ENCODE measurements at regions of chr3 and their contacts with region 1.

Region 1: DNA sequence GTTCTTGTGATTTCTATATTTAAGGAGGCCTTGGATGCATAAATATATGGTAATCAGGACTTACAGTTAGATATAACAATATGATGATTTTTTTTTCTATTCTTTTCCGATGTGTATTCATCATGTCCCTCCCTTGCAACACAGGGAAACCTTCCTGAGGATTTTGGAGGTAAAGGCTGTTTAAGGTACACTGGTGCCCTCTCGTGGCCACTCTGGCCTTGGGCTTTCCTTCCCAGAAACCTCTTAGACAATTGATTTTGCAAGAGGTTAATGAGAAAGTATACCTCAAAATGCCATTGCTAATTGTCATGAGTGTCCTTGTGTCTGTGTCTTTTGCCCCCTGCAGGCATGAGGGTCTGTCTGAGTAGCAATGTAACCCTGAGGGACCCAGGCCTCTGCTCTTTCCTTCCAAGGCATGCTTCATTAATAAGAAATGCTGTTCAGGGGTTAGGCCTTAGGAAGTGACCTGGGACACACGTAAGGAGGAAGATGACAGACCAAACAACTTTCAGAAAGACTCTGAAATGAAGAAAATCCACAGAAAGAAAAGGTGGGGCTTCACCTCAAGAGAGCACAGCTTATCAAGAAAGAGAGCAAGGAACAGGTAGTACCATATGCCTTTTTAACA is 70.3 kb upstream of the PPP2R3A start:
- DNase-seq: peak; percentile 73
- H3K4me3 ChIP-seq: no peak overlapping the region
- H3K27ac ChIP-seq: peak overlapping the region; percentile 1
- H3K4me1 ChIP-seq: peaks cover 18% of the 10 kb centered on the region
- H3K27me3 ChIP-seq: no peaks in the 10 kb centered on the region
- CTCF ChIP-seq: peak; percentile 90 to 95

Region 2: GRCh38 chr3:134794950-134795745 is 1100.1 kb before region 1 on chr3 and contains the start of gene EPHB1:
- CTCF ChIA-PET with region 1: no interaction called
- dilution Hi-C with region 1: no loop called
- in situ Hi-C with region 1: loop called in 1 of 2 experiments (anchors 25 kb)
- intact Hi-C with region 1: loop called (anchors 1 kb)
- DNase-seq: peak; percentile 82
- H3K4me3 ChIP-seq: peak within 1 kb of the TSS; percentile 42 to 55 (median 44)
- H3K27ac ChIP-seq: no peak within 1 kb of the TSS
- H3K4me1 ChIP-seq: peaks cover 12% of the 10 kb centered on the region
- H3K27me3 ChIP-seq: peaks cover 25% of the 10 kb centered on the region
- CTCF ChIP-seq: peak; percentile 68 to 77
- total RNA-seq, gene EPHB1: 0.24 TPM in 1 of 2 donors, not detected in the other

Region 3: DNA sequence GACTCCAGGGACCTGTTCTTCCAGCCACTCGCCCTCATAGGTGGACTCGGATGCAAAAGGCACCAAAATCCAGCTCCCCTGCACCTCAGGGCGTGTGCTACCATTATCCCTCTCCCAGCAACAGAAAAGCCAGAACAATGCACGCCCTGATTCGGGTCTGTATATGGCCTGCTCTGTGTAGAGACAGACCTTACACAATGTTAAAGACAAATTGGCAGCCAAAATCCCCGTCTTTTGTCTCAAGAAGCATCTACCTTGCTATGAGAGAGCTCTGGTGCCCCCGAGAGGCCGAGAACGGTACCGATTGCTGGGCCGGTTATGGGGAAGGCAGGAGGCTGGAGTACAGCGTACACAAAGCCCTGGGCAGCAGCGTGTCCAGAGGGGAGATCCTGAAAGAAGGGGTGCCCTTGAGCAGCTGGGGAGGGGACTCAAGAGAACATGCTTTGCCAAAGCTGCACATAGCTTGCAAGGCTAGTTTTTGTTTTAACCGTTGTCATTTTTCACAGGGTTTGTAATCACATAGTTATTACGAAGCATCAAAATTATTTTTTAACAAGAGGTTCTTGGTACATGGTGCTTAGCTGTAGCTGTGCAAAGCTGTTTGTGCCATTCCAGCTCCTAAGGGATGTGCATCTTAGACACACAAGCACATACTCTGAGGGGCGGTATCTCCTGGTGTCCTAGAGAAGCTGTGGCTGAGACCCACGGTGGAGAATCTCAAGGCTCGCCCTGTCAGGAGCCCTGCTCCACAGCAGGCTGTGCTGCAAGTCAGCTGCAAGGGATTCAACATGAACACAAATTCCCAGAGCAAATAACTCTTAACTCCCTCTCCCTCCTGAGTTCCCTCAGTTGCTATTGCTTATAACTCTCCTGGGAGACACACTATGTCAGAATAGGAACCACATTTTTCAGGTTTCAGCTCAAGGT is 391.2 kb before region 1 on chr3:
- CTCF ChIA-PET with region 1: no interaction called
- dilution Hi-C with region 1: no loop called
- in situ Hi-C with region 1: no loop called
- intact Hi-C with region 1: loop called (anchors 2 kb)
- DNase-seq: peak; percentile 40
- H3K4me3 ChIP-seq: no peak overlapping the region
- H3K27ac ChIP-seq: no peak overlapping the region
- H3K4me1 ChIP-seq: no peaks in the 10 kb centered on the region
- H3K27me3 ChIP-seq: no peaks in the 10 kb centered on the region
- CTCF ChIP-seq: peak; percentile 77 to 79

Region 4: DNA sequence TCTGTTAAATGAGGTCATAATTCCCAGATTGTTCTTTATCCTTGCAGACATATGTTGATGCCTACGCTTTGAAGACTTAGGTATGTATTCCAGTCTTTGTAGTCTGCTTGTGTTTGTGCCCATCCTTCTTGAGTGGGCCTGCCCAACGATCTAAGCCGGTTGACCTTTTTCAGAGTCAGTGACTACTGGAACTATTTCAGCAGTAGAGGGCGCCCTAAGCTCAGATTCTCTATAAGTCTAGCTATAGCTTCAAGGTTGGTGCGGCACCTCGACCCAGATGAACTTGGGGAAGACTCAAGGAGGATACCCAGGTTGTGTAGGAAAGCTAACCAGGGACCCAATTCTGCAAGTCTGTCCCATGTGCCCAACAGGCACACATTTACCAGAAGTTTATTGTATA is 158.5 kb before region 1 on chr3:
- CTCF ChIA-PET with region 1: no interaction called
- dilution Hi-C with region 1: no loop called
- in situ Hi-C with region 1: loop called in 1 of 2 experiments (anchors 5 kb)
- intact Hi-C with region 1: loop called (anchors 1 kb)
- DNase-seq: peak; percentile 30
- H3K4me3 ChIP-seq: no peak overlapping the region
- H3K27ac ChIP-seq: no peak overlapping the region
- H3K4me1 ChIP-seq: no peaks in the 10 kb centered on the region
- H3K27me3 ChIP-seq: no peaks in the 10 kb centered on the region
- CTCF ChIP-seq: peak; percentile 42 to 45

Region 5: GRCh38 chr3:135762188-135762856 is 132.9 kb before region 1 on chr3:
- CTCF ChIA-PET with region 1: no interaction called
- dilution Hi-C with region 1: loop called (anchors 25 kb)
- in situ Hi-C with region 1: no loop called
- intact Hi-C with region 1: no loop called
- DNase-seq: no peak
- H3K4me3 ChIP-seq: no peak overlapping the region
- H3K27ac ChIP-seq: no peak overlapping the region
- H3K4me1 ChIP-seq: no peaks in the 10 kb centered on the region
- H3K27me3 ChIP-seq: no peaks in the 10 kb centered on the region
- CTCF ChIP-seq: peak; percentile 3 to 21